ENCODE measurements at regions of chr18 and their contacts with region 1.

Region 1: DNA sequence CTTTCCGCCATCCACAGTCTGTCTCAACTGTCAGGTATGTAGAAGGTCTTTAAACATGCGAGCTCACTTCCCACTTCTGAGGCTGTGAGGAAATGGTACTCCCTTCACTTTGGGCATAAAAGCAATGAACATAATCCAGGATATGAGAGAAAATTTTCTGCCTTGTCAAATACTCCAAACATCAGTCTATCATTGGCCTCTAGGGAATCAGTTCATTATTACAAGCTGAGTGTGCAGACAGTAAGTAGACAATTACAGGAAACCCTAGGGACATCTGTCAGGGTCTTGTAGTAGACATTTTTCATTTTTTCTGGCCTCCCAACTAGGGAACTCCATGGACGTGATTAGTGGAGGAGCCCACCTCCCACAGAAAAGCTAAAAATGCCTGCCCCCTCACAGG is 13.6 kb upstream of the APCDD1 start:
- DNase-seq: no peak
- H3K4me3 ChIP-seq: no peak overlapping the region
- H3K27ac ChIP-seq: no peak overlapping the region
- H3K4me1 ChIP-seq: no peaks in the 10 kb centered on the region
- H3K27me3 ChIP-seq: peaks cover 7% of the 10 kb centered on the region
- CTCF ChIP-seq: no peak
- EP300 ChIP-seq: no peak
- POLR2A ChIP-seq: no peak

Region 2: GRCh38 chr18:10475276-10475653 is 34.4 kb after region 1 on chr18:
- in situ Hi-C with region 1: no loop called
- intact Hi-C with region 1: no loop called
- DNase-seq: no peak
- H3K4me3 ChIP-seq: no peak overlapping the region
- H3K27ac ChIP-seq: no peak overlapping the region
- H3K4me1 ChIP-seq: peaks cover 7 to 18% (median 13%) of the 10 kb centered on the region in 4 donors
- H3K27me3 ChIP-seq: no peaks in the 10 kb centered on the region
- CTCF ChIP-seq: no peak
- EP300 ChIP-seq: no peak
- POLR2A ChIP-seq: no peak

Region 3: GRCh38 chr18:10485475-10485874 is 44.6 kb after region 1 on chr18:
- in situ Hi-C with region 1: no loop called
- intact Hi-C with region 1: loop called (anchors 1 kb)
- DNase-seq: no peak
- H3K4me3 ChIP-seq: no peak overlapping the region
- H3K27ac ChIP-seq: no peak overlapping the region
- H3K4me1 ChIP-seq: peaks cover 0 to 4% (median 0%) of the 10 kb centered on the region in 4 donors
- H3K27me3 ChIP-seq: no peaks in the 10 kb centered on the region
- CTCF ChIP-seq: no peak
- EP300 ChIP-seq: no peak
- POLR2A ChIP-seq: no peak

Region 4: GRCh38 chr18:10530852-10531251 is 90.0 kb after region 1 on chr18:
- in situ Hi-C with region 1: no loop called
- intact Hi-C with region 1: no loop called
- DNase-seq: no peak
- H3K4me3 ChIP-seq: no peak overlapping the region
- H3K27ac ChIP-seq: no peak overlapping the region
- H3K4me1 ChIP-seq: peaks cover 0 to 26% (median 16%) of the 10 kb centered on the region in 4 donors
- H3K27me3 ChIP-seq: no peaks in the 10 kb centered on the region
- CTCF ChIP-seq: no peak
- EP300 ChIP-seq: no peak
- POLR2A ChIP-seq: no peak

Measured in transverse colon (tissue), 4 donors.